Common myeloid progenitor, CD34-positive (primary cell): ENCODE measurements at regions of chr7 and their contacts with region 1.

Region 1: DNA sequence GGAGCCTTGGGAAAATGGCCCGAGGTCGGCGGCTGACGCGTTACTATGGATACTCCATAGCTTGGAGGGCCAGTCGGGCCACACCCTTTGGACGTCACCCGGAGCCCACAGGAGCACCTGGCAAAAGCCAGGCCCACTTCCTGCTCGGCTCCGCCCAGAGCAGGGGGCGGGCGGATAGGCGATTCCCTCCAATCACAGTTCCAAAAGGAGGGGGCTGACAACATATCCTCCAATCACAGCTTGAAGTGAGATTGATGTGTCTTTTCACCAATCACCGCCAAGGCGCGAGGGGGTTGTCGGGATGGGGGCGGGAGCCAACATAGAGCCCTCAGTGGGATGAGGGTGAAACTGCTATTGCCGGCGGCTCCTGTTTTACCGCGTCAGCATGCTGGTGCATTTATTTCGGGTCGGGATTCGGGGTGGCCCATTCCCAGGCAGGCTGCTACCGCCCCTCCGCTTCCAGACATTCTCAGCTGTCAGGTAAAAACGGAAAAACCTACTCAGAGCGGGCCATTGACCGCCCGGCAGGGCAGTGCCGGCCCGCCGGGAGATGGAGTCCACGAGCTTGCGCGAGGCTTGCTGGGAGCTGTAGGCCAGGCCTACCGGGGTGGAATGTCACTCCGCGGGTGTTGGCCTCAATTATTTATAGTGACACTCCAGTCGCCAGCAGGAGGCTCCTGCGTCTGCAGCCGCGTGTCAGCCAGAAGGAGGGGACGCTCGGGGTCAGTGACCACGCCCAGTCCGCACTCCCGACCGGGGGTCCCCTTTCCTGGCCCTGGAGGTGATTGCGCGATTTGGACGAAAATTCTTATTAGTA is at the start of gene ABCB8:
- DNase-seq: peak; percentile 99
- H3K4me3 ChIP-seq: peak within 1 kb of the TSS; percentile 72 to 90 (median 84)
- H3K27ac ChIP-seq: peak within 1 kb of the TSS; percentile 75 to 89
- H3K4me1 ChIP-seq: peaks cover 7 to 18% (median 14%) of the 10 kb centered on the region in 4 experiments
- H3K27me3 ChIP-seq: peaks cover 0 to 3% (median 0%) of the 10 kb centered on the region in 5 experiments

Region 2: GRCh38 chr7:151008511-151009323 is 19.6 kb before region 1 on chr7:
- CTCF ChIA-PET with region 1: interaction called, 61 read pairs
- POLR2A ChIA-PET with region 1: no interaction called
- DNase-seq: peak in 2 of 3 donors; percentile 65 to 69
- H3K4me3 ChIP-seq: peak overlapping the region in 2 of 7 experiments; percentile 3 to 14
- H3K27ac ChIP-seq: peak overlapping the region in 1 of 2 experiments; percentile 44
- H3K4me1 ChIP-seq: peaks cover 0 to 36% (median 30%) of the 10 kb centered on the region in 4 experiments
- H3K27me3 ChIP-seq: peaks cover 0 to 38% (median 4%) of the 10 kb centered on the region in 5 experiments

Region 3: DNA sequence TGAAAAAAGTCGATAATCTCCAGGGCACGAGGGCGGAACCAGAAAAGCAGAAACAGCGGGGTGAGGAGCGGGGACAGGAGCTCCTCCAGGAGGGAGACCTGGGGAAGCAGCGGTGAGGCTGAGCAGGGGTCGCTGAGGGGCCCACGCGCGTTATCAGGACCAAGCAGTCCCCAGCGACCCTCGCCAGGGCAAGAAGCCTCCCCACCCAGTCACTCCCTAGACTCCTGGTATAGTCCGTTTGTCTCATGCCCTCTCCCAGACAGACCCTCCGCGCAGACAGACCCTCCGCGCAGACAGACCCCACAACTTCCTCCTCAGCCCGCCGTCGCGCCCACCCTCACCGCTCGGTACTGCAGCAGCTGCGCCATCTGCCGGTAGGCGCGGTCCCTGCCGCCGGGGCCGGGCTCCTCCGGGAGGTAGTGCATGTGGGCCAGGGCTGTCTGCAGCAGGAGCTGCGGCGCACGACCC is 10.4 kb before region 1 on chr7:
- CTCF ChIA-PET with region 1: interaction called, 61 read pairs
- POLR2A ChIA-PET with region 1: interaction called, 4 read pairs
- DNase-seq: peak; percentile 70 to 87 (median 86)
- H3K4me3 ChIP-seq: peak overlapping the region in 6 of 7 experiments; percentile 14 to 66 (median 46)
- H3K27ac ChIP-seq: peak overlapping the region in 1 of 2 experiments; percentile 61
- H3K4me1 ChIP-seq: peaks cover 0 to 40% (median 31%) of the 10 kb centered on the region in 4 experiments
- H3K27me3 ChIP-seq: peaks cover 5 to 40% (median 13%) of the 10 kb centered on the region in 5 experiments

Region 4: GRCh38 chr7:151100921-151101320 is 72.6 kb after region 1 on chr7:
- CTCF ChIA-PET with region 1: no interaction called
- POLR2A ChIA-PET with region 1: no interaction called
- DNase-seq: no peak
- H3K4me3 ChIP-seq: no peak overlapping the region
- H3K27ac ChIP-seq: no peak overlapping the region
- H3K4me1 ChIP-seq: peaks cover 0 to 25% (median 11%) of the 10 kb centered on the region in 4 experiments
- H3K27me3 ChIP-seq: no peaks in the 10 kb centered on the region